PC-3 (cell line): ENCODE measurements at regions of chr3 and their contacts with region 1.

Region 1: GRCh38 chr3:36700537-36701248 is 63.7 kb downstream of the DCLK3 start:
- DNase-seq: peak; percentile 81
- ATAC-seq: peak; percentile 74
- H3K4me3 ChIP-seq: no peak overlapping the region
- H3K27ac ChIP-seq: no peak overlapping the region
- H3K4me1 ChIP-seq: peaks cover 16% of the 10 kb centered on the region
- H3K27me3 ChIP-seq: no peaks in the 10 kb centered on the region
- CTCF ChIP-seq: peak; percentile 94

Region 2: DNA sequence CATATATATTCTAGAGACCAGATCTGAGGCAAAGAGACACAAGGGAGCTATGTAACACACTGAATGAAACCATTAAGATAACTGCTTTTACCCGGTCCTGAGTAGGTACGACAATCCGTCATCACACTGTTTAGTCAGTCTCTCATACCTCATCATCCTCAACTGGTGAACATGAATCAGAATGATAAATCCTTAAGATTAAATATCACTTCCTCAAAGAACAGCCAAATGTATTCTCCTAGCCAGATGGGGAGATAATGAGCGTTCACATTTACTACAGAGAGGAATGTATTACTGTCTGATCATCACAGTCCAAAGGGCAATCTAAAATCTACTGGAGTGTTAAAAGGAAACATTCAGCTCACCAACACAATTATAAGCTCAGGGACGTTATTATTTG is 639.7 kb before region 1 on chr3:
- CTCF ChIA-PET with region 1: no interaction called
- POLR2A ChIA-PET with region 1: no interaction called
- intact Hi-C with region 1: loop called (anchors 5 kb)
- DNase-seq: peak; percentile 88
- ATAC-seq: peak; percentile 47
- H3K4me3 ChIP-seq: no peak overlapping the region
- H3K27ac ChIP-seq: peak overlapping the region; percentile 73
- H3K4me1 ChIP-seq: peaks cover 52% of the 10 kb centered on the region
- H3K27me3 ChIP-seq: no peaks in the 10 kb centered on the region
- CTCF ChIP-seq: no peak

Region 3: DNA sequence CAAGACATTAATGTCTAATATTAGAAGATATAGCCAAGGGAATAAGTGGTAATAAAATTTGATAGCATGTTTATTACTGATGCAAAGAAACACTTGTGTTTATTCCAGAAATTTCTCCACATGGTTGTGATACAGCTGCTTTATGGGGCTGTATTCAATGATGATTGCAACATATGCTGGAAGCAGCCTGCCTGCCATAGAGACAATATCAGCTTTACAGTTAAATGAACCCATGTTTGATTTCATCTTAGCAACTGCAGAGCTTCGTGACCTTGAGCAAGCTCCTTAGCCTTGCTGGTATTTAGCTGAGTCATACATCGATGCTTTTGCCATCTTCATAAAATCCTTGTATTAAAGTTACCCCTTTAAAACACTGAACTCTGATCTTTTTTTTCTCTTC is 488.4 kb before region 1 on chr3:
- CTCF ChIA-PET with region 1: no interaction called
- POLR2A ChIA-PET with region 1: no interaction called
- intact Hi-C with region 1: loop called (anchors 10 kb)
- DNase-seq: peak; percentile 33
- ATAC-seq: peak; percentile 52
- H3K4me3 ChIP-seq: no peak overlapping the region
- H3K27ac ChIP-seq: no peak overlapping the region
- H3K4me1 ChIP-seq: peaks cover 11% of the 10 kb centered on the region
- H3K27me3 ChIP-seq: no peaks in the 10 kb centered on the region
- CTCF ChIP-seq: no peak

Region 4: GRCh38 chr3:36540888-36541518 is 159.7 kb before region 1 on chr3:
- CTCF ChIA-PET with region 1: interaction called, 4 read pairs
- POLR2A ChIA-PET with region 1: no interaction called
- intact Hi-C with region 1: loop called (anchors 1 kb)
- DNase-seq: peak; percentile 71
- ATAC-seq: peak; percentile 78
- H3K4me3 ChIP-seq: no peak overlapping the region
- H3K27ac ChIP-seq: no peak overlapping the region
- H3K4me1 ChIP-seq: no peaks in the 10 kb centered on the region
- H3K27me3 ChIP-seq: no peaks in the 10 kb centered on the region
- CTCF ChIP-seq: peak; percentile 96

Region 5: GRCh38 chr3:36597422-36597821 is 103.3 kb before region 1 on chr3:
- CTCF ChIA-PET with region 1: no interaction called
- POLR2A ChIA-PET with region 1: no interaction called
- intact Hi-C with region 1: loop called (anchors 1 kb)
- DNase-seq: peak; percentile 75
- ATAC-seq: peak; percentile 92
- H3K4me3 ChIP-seq: no peak overlapping the region
- H3K27ac ChIP-seq: no peak overlapping the region
- H3K4me1 ChIP-seq: peaks cover 10% of the 10 kb centered on the region; the same call in 1 of the 2 replicates
- H3K27me3 ChIP-seq: no peaks in the 10 kb centered on the region
- CTCF ChIP-seq: no peak

Region 6: GRCh38 chr3:36656884-36657283 is 43.8 kb before region 1 on chr3:
- CTCF ChIA-PET with region 1: no interaction called
- POLR2A ChIA-PET with region 1: no interaction called
- intact Hi-C with region 1: no loop called
- DNase-seq: no peak
- ATAC-seq: no peak
- H3K4me3 ChIP-seq: no peak overlapping the region
- H3K27ac ChIP-seq: no peak overlapping the region
- H3K4me1 ChIP-seq: peaks cover 9% of the 10 kb centered on the region
- H3K27me3 ChIP-seq: no peaks in the 10 kb centered on the region
- CTCF ChIP-seq: no peak

Region 7: DNA sequence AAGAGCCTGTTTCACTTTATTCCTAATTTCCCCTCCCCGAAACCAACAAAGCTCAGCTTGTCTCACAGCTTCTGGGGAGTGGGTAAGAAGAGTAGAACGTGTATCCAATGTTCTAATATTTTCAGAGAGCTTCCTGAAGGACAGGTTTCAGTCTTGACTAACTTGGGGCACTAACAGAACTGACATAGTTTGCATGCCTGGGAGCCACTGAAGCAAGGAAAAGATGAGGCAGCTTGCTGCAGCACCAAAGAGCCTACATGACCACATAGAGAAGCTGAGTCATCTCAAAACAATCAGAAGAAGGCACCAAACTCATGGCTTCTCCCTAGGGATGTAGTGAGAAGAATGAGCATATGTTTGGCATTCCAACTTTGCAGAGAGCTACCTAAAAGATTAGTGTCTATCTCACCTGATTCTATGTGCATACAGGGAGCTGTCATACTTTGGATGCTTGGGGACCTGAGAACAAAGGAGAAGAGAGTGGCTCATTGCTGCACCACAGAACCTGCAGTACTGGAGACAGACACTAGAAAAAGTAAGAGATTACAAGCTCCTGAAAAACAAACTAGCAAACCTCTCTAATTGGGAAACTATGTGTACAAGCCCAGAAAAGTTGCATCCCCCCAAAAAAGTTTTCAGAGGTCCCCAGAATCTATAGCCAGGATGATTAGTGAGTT is 23.2 kb before region 1 on chr3:
- CTCF ChIA-PET with region 1: interaction called, 6 read pairs
- POLR2A ChIA-PET with region 1: no interaction called
- intact Hi-C with region 1: loop called (anchors 2 kb)
- DNase-seq: peak; percentile 97
- ATAC-seq: peak; percentile 80
- H3K4me3 ChIP-seq: no peak overlapping the region
- H3K27ac ChIP-seq: peak overlapping the region; percentile 76
- H3K4me1 ChIP-seq: peaks cover 29% of the 10 kb centered on the region
- H3K27me3 ChIP-seq: no peaks in the 10 kb centered on the region
- CTCF ChIP-seq: no peak

Region 8: DNA sequence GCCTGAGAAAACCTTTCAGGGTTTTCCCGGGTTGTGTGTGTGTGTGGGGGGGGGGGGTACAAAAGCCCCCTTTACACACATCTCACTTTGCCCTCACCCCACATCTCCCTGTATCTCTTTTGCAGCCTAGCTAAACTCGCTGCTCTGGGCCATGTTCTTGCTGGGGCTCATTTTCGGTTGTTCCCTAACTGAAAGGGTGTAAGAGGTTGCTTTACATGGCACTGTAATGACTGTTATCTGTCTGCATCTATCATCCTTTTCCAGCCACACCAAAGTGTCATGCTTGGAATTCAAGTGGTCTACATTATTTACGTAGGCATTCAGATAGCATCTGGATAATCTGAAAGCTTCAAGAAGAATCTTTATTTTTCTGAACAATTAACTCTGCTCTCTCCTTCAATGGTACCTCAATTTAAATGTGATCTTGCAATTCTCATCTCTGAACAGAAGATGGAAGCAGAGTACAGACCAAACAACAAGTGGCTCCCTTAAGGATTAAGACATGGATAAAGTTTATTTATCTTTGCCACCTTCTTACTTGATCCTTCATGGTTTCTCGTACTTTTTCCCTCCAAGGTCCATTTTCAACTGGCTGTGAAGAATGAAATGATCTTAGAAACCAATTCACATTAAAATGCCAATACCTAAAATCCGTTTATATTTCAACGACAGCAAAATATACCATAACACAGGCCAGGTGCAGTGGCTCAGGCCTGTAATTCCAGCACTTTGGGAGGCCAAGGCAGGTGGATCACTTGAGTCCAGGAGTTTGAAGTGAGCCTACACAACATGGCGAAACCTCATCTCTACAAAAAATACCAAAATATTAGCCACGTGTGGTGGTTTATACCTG is 28.7 kb after region 1 on chr3:
- CTCF ChIA-PET with region 1: no interaction called
- POLR2A ChIA-PET with region 1: no interaction called
- intact Hi-C with region 1: no loop called
- DNase-seq: peak; percentile 73
- ATAC-seq: peak; percentile 78
- H3K4me3 ChIP-seq: no peak overlapping the region
- H3K27ac ChIP-seq: no peak overlapping the region
- H3K4me1 ChIP-seq: no peaks in the 10 kb centered on the region
- H3K27me3 ChIP-seq: peaks cover 26% of the 10 kb centered on the region
- CTCF ChIP-seq: peak; percentile 86